ENCODE measurements at regions of chr5 and their contacts with region 1.

Region 1: DNA sequence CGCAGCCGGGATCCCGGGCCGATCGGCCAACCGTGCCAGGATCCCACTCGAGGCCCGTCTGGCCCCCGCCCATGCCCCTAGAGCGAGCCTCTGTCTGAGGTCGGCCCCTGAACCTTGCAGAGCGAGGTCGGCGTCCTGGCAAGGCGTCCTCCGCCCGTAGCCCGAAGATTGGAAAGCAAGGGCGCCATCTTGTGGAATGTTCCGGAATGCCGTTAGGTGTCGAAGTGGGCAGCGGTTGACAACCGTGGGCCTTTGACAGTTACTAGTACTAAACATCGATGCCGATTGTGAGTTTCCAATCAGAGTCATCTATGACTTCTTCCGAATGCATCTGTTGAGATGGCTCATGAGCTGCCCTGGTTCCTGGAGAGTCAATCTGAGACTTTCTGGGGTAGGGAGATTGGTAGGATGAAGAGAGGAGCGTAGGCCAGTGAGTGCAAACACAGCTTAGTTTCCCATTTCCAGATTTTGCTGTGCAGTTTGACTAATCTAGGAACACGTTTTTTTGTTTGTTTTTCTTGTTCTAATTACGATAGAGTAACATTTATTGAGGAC is 923 bp upstream of the PLK2 start:
- DNase-seq: peak; percentile 94
- ATAC-seq: peak; percentile 83

Region 2: GRCh38 chr5:57499262-57500050 is 961.4 kb before region 1 on chr5:
- intact Hi-C with region 1: loop called (anchors 1 kb)
- DNase-seq: no peak
- ATAC-seq: peak; percentile 59

Region 3: GRCh38 chr5:57779383-57780223 is 681.2 kb before region 1 on chr5:
- intact Hi-C with region 1: loop called (anchors 1 kb)
- DNase-seq: no peak
- ATAC-seq: peak; percentile 79

Region 4: GRCh38 chr5:58019614-58020013 is 441.2 kb before region 1 on chr5:
- intact Hi-C with region 1: loop called (anchors 10 kb)
- DNase-seq: peak; percentile 74
- ATAC-seq: peak; percentile 94

Region 5: DNA sequence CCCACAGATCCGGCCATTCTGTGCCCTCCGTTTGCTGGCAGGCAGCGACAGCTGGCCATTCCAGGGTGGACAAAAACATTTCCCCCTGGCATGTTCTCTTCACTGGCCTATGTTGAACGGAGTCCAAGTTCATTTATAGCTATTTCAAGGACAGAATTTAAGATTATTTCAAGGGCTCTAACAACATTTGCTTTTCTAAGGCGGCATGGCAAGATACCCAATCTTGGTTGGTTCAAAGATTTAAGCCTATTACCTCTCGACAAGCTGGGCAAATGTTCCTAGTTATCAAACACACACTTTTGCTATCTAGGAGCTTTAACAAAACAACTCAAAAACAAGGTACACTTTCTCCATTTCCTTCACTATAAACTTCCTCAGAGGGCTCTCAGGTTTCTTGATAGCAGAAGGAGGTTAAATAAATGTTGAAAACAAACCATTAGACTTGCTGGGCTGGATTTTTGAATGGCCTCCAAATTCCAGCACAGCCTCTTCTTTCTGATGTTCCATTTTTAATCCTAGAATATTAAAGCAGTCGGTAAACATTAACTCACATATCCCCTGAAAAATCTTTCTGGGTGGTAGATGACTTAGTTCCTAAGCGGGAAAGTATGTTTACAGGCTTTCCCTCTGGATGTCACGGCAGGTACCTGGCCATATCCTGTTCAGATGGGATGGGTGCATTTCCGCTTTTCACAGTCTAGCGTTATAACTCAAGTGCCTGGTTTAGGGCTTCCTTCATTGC is 333.2 kb before region 1 on chr5:
- intact Hi-C with region 1: loop called (anchors 1 kb)
- DNase-seq: no peak
- ATAC-seq: peak; percentile 56

Region 6: GRCh38 chr5:58246461-58246944 is 214.3 kb before region 1 on chr5:
- intact Hi-C with region 1: loop called (anchors 5 kb)
- DNase-seq: no peak
- ATAC-seq: no peak

Region 7: GRCh38 chr5:58366461-58366860 is 94.3 kb before region 1 on chr5:
- intact Hi-C with region 1: loop called (anchors 10 kb)
- DNase-seq: no peak
- ATAC-seq: peak; percentile 82